A673 (cell line): ENCODE measurements at regions of chr12 and their contacts with region 1.

Region 1: GRCh38 chr12:105201299-105201698 is 34.7 kb downstream of the APPL2 start:
- DNase-seq: no peak
- H3K4me3 ChIP-seq: no peak overlapping the region
- H3K27ac ChIP-seq: no peak overlapping the region
- H3K4me1 ChIP-seq: no peaks in the 10 kb centered on the region
- H3K27me3 ChIP-seq: no peaks in the 10 kb centered on the region
- CTCF ChIP-seq: no peak

Region 2: DNA sequence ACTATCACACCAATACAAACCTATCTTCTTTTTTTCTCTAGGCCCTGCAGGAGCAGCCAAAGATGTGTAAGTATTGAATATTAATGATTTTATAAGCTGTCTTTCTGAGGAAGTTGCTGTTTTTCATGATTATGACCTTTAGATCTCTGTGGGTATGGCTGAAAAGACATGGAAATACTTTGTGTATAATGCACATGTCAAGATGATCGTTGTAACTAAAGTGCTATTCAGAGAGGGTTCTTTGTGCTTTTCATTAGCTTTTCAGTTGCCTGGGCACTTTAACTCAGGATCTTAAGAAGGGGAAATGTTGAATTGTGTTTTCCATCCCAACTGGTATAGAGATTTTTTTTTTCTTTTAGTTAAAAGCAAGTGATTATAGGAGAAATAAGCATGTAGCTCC is 147.3 kb after region 1 on chr12:
- CTCF ChIA-PET with region 1: no interaction called
- POLR2A ChIA-PET with region 1: interaction called, 16 read pairs
- intact Hi-C with region 1: no loop called
- DNase-seq: peak; percentile 29
- H3K4me3 ChIP-seq: no peak overlapping the region
- H3K27ac ChIP-seq: peak overlapping the region; percentile 26
- H3K4me1 ChIP-seq: peaks cover 14% of the 10 kb centered on the region
- H3K27me3 ChIP-seq: no peaks in the 10 kb centered on the region
- CTCF ChIP-seq: no peak